Heart right ventricle (tissue), 16 donors: ENCODE measurements at regions of chr11 and their contacts with region 1.

Region 1: DNA sequence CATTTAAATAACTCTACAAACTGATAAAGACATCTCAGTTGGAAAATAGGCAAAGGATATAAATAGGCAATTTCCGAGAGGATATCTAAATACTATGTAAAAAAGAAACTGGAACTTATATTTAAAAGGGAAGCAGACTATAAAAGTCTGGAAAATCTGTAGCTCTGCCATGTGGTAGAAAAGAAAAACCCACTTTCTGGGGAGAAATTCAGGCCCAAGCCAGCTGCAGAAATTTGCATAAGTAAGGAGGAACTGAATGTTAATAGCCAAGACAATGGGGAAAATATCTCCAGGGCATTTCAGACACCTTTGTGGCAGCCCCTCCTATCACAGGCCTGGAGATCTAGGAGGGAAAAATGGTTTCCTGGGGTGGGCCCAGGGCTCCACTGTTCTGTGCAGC is 97.8 kb upstream of the ZBED5 start:
- DNase-seq: no peak
- ATAC-seq: no peak
- H3K4me3 ChIP-seq: no peak overlapping the region
- H3K27ac ChIP-seq: no peak overlapping the region
- H3K4me1 ChIP-seq: no peaks in the 10 kb centered on the region
- H3K27me3 ChIP-seq: peaks cover 0 to 12% (median 0%) of the 10 kb centered on the region in 7 donors
- CTCF ChIP-seq: no peak

Region 2: DNA sequence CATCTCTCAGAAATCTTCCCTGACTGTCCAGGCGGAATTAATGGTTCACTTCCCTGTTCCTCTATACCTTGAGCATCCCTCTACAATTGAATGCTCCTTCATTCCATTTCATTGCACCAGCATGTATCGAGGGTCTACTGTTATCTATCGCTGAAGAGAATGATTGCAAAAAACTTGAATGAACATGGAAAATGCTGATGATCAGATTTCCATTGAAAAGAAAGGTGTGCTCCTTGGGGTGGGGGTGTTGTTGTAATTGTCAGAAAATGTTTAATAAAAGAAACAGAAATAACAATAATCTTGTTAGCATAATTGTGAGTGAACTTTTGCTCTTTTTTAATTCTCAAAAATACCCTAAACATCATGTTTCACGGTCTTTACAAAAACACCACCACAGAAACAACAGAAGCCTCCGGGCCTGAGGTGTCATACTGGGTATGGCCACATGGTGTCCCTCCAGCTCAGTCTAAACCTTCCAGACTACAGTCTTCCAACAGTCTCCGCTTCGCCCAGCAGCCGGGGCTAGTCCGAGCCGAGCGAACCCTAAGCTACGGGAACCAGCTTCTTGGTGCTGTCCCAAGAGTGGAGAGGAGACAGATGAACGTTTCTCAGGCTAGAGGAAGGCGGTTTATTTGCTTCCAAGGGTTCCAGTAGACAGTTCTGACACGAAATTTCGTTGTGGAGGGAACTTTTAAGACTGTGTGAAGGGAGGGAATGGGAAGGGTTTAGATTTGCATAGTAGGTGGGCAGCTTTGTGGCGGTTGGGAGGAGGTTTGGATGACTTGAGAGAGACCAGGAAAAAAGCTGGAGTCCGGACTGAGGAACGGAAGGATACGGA is 21.9 kb before region 1 on chr11:
- intact Hi-C with region 1: no loop called
- DNase-seq: peak; percentile 87 to 91
- ATAC-seq: peak; percentile 78 to 93 (median 89)
- H3K4me3 ChIP-seq: peak overlapping the region; percentile 7 to 56 (median 52)
- H3K27ac ChIP-seq: peak overlapping the region; percentile 28 to 89 (median 72)
- H3K4me1 ChIP-seq: peaks cover 0 to 33% (median 17%) of the 10 kb centered on the region in 9 donors
- H3K27me3 ChIP-seq: peaks cover 0 to 49% (median 0%) of the 10 kb centered on the region in 7 donors
- CTCF ChIP-seq: peak; percentile 90 to 99 (median 95)

Region 3: DNA sequence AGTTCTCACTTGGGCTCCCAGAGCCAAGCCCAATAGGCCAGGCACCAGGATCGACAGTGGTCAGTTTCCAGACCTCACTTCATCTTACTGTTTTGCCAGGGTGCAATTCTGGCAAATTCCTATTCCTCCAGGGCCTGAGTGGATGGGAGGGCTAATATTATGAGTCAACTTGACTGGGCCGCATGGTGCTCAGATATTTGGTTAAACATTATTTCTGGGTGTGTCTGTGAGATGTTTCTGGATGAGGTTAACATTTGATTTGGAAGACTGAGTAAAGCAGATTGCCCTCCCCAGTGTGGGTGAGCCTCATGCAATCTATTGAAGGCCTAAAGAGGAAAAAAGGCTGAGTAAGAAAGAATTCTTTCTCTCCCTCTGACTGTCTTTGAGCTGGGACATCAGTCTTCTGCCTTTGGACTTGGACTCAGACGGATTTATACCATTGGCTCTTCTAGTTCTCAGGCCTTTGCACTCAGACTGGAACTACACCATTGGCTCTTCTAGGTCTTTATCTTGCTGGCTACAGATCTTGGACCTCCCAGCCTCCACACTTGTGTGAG is 35.1 kb after region 1 on chr11:
- intact Hi-C with region 1: loop called in 1 of 10 experiments (anchors 5 kb)
- DNase-seq: no peak
- ATAC-seq: no peak
- H3K4me3 ChIP-seq: no peak overlapping the region
- H3K27ac ChIP-seq: no peak overlapping the region
- H3K4me1 ChIP-seq: no peaks in the 10 kb centered on the region
- H3K27me3 ChIP-seq: no peaks in the 10 kb centered on the region
- CTCF ChIP-seq: no peak

Region 4: DNA sequence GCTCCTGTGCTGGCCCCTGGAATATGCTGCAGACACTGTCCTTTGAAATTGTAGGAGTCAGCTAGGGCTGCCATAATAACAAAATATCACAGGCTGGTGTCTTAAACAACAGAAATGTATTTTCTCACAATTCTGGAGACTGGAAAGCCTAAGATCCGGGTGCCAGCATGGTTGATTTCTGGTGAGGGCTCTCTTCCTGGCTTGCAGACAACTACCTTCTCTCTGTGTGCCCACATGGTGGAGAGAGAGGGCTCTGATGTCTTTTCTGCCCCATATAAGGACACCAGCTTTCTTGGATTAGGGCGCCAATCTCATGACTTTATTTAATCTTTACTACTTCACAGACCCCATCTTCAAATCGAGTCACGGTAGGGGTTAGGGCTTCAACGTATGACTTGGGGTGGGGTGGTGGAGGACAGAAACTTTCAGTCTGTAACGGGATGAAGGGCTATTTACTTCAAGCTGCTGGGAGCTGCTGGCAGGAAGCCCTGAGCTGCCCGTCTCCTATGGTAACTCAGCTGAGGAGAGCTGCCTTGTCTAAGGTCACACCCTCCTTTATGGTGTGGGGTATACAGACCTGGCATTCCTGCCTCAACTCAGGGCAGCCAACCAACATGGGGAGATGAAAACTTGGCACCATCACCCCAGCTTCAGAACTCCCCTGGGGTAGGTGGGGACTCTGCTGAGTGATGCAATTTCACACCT is 45.1 kb after region 1 on chr11:
- intact Hi-C with region 1: loop called in 1 of 10 experiments (anchors 5 kb)
- DNase-seq: no peak
- ATAC-seq: no peak
- H3K4me3 ChIP-seq: no peak overlapping the region
- H3K27ac ChIP-seq: no peak overlapping the region
- H3K4me1 ChIP-seq: no peaks in the 10 kb centered on the region
- H3K27me3 ChIP-seq: peaks cover 0 to 29% (median 23%) of the 10 kb centered on the region in 7 donors
- CTCF ChIP-seq: no peak